ENCODE measurements at regions of chr1 and their contacts with region 1.

Region 1: DNA sequence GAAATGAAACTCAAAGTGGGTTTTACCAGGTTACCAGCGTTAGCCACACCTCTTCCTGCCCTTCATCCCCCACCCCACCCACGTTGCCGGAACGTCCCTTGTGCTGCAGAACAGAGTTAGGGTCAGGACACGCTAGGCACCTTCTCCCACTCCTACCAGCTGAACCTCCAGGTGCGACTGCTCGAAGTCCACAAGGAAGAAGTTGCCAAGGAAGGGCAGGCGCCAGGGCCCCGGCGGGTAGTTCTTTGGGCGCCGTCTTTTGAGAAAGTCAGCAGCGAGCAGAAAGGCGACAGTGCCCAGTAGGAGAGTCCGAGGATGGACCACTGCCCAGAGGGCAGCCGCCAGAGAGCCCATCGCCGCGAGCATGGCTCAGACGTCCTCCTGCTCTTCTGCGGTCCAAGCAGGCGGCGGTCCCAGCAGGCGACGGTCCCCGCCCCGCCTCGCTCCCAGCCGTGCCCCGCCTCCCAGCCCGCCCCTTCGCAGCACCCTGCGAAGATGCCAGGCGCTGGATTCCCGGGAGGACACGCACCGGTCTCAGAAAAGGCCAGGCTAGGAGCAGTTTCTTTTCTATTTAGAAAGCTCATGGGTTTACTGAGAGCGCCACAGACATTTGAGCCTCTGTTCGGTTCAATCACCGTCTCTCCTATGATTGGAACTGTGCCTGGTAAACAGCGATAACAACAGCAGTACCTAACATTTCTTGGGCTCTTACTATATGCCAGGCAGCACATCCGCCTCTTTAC is at the start of gene CYP2J2:
- DNase-seq: no peak
- H3K4me3 ChIP-seq: peak within 1 kb of the TSS; percentile 53 to 91 (median 81)
- H3K27ac ChIP-seq: no peak within 1 kb of the TSS
- H3K4me1 ChIP-seq: peaks cover 4% of the 10 kb centered on the region
- H3K27me3 ChIP-seq: peaks cover 9% of the 10 kb centered on the region
- CTCF ChIP-seq: no peak
- polyA plus RNA-seq, gene CYP2J2: 5.7 to 6.7 TPM (median 6.7 TPM) in 3 replicates

Region 2: GRCh38 chr1:59866462-59866861 is 60.1 kb before region 1 on chr1:
- dilution Hi-C with region 1: no loop called
- DNase-seq: no peak
- H3K4me3 ChIP-seq: no peak overlapping the region
- H3K27ac ChIP-seq: no peak overlapping the region
- H3K4me1 ChIP-seq: no peaks in the 10 kb centered on the region
- H3K27me3 ChIP-seq: no peaks in the 10 kb centered on the region
- CTCF ChIP-seq: no peak

Region 3: GRCh38 chr1:59880735-59881134 is 45.8 kb before region 1 on chr1:
- dilution Hi-C with region 1: loop called (anchors 5 kb)
- DNase-seq: no peak
- H3K4me3 ChIP-seq: no peak overlapping the region
- H3K27ac ChIP-seq: no peak overlapping the region
- H3K4me1 ChIP-seq: no peaks in the 10 kb centered on the region
- H3K27me3 ChIP-seq: no peaks in the 10 kb centered on the region
- CTCF ChIP-seq: no peak

Region 4: DNA sequence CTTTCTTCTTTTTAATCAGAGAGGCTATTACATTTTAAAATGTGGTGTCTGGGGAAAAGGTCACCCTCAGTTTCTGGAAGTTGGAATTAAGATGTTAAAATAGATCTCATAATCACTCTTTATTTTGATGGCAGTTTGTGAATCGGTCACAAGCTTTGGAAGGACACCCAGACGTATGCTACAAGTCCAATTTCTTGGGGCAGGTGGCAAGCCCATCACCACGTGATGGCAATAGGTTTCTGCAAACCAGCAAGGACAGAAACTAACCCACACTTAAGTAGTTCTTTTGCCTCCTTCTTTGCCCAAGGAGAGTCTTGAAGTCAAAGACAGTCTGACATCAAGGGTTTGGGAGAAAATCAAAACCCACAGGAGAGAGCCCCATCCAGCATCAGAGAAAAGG is 74.1 kb after region 1 on chr1:
- dilution Hi-C with region 1: no loop called
- DNase-seq: no peak
- H3K4me3 ChIP-seq: no peak overlapping the region
- H3K27ac ChIP-seq: no peak overlapping the region
- H3K4me1 ChIP-seq: no peaks in the 10 kb centered on the region
- H3K27me3 ChIP-seq: no peaks in the 10 kb centered on the region
- CTCF ChIP-seq: no peak